ENCODE measurements at regions of chr3 and their contacts with region 1.

Region 1: GRCh38 chr3:187150599-187150998 is 11.3 kb upstream of the RPL39L start:
- DNase-seq: peak; percentile 85
- ATAC-seq: peak; percentile 86
- H3K4me3 Mint-ChIP-seq: no peak overlapping the region
- H3K27ac Mint-ChIP-seq: no peak overlapping the region
- H3K4me1 Mint-ChIP-seq: no peaks in the 10 kb centered on the region
- H3K27me3 Mint-ChIP-seq: no peaks in the 10 kb centered on the region
- CTCF ChIP-seq: peak; percentile 55

Region 2: DNA sequence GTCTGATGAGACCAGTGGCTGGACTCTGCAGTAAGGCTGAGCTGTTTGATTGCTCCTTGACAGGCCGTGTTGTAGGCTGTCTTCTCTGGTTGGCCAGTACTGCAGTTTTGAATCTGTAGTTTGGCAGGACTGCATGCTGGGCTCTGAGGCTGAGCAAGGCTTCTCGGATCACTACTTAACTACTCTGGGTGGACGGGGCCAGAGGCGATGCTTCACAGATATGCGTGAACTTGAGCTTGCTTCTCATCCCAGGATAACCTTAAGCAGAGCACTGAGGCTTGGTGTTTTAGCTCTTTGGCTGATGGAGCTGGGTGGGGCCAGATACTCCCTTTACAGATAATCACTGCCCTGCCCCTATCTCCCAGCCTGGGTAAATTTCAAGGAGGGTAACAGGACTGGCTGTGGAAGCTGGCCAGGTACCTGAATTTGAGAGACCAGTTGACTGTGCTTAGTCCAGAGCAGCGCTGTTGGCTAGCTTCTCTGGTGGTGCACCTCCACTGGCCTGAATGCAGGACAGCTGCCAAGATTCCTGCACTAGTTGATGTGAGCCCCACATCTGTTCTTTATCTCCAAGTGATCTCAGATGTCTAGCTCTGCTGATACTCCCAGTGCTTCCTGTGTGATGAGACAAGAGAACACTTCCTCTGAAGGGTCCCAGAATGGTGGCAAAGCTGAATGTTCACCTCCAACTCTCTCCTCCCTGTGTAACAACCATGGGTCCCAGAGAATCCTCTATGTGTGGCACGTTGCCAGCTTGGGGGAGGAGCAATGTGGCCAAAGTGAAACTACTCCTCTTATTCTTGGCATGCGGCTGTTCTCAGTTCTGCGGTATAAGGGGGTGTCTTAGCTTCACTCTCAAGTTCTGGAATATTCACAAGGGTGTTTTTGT is 49.2 kb before region 1 on chr3:
- CTCF ChIA-PET with region 1: interaction called, 10 read pairs
- POLR2A ChIA-PET with region 1: interaction called, 3 read pairs
- intact Hi-C with region 1: no loop called
- DNase-seq: peak; percentile 66
- ATAC-seq: peak; percentile 73
- H3K4me3 Mint-ChIP-seq: no peak overlapping the region
- H3K27ac Mint-ChIP-seq: peak overlapping the region; percentile 26
- H3K4me1 Mint-ChIP-seq: peaks cover 29% of the 10 kb centered on the region
- H3K27me3 Mint-ChIP-seq: no peaks in the 10 kb centered on the region
- CTCF ChIP-seq: no peak

Region 3: DNA sequence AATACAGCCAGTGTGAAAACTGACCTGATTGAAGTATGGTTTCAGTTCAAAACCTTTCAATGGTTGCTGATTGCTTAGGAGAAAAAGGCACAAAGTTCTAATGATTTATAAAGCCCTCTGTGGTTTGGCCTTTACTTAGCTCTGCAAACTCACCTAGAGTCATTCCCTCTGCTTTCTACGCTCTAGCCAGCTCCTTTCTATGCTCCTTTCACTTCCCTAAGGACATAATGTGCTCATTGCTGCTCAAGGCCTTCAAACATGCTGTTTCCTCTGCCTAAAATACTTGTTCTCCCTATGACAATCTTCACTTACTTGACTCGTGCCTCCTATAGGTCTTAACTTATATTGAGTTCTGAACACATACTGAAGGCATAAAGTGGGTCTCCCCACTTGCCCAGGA is 30.3 kb before region 1 on chr3:
- CTCF ChIA-PET with region 1: interaction called, 116 read pairs
- POLR2A ChIA-PET with region 1: no interaction called
- intact Hi-C with region 1: no loop called
- DNase-seq: no peak
- ATAC-seq: no peak
- H3K4me3 Mint-ChIP-seq: no peak overlapping the region
- H3K27ac Mint-ChIP-seq: no peak overlapping the region
- H3K4me1 Mint-ChIP-seq: peaks cover under 1% of the 10 kb centered on the region
- H3K27me3 Mint-ChIP-seq: no peaks in the 10 kb centered on the region
- CTCF ChIP-seq: no peak

Region 4: GRCh38 chr3:187130346-187131066 is 20.1 kb before region 1 on chr3:
- CTCF ChIA-PET with region 1: interaction called, 13 read pairs
- POLR2A ChIA-PET with region 1: no interaction called
- intact Hi-C with region 1: no loop called
- DNase-seq: peak; percentile 58
- ATAC-seq: peak; percentile 92
- H3K4me3 Mint-ChIP-seq: peak overlapping the region; percentile 49
- H3K27ac Mint-ChIP-seq: peak overlapping the region; percentile 97
- H3K4me1 Mint-ChIP-seq: peaks cover 35% of the 10 kb centered on the region
- H3K27me3 Mint-ChIP-seq: no peaks in the 10 kb centered on the region
- CTCF ChIP-seq: no peak

Region 5: GRCh38 chr3:187164885-187165543 is 14.4 kb after region 1 on chr3:
- CTCF ChIA-PET with region 1: interaction called, 58 read pairs
- POLR2A ChIA-PET with region 1: interaction called, 5 read pairs
- intact Hi-C with region 1: no loop called
- DNase-seq: peak; percentile 52
- ATAC-seq: peak; percentile 80
- H3K4me3 Mint-ChIP-seq: no peak overlapping the region
- H3K27ac Mint-ChIP-seq: no peak overlapping the region
- H3K4me1 Mint-ChIP-seq: peaks cover under 1% of the 10 kb centered on the region
- H3K27me3 Mint-ChIP-seq: no peaks in the 10 kb centered on the region
- CTCF ChIP-seq: peak; percentile 88

Region 6: DNA sequence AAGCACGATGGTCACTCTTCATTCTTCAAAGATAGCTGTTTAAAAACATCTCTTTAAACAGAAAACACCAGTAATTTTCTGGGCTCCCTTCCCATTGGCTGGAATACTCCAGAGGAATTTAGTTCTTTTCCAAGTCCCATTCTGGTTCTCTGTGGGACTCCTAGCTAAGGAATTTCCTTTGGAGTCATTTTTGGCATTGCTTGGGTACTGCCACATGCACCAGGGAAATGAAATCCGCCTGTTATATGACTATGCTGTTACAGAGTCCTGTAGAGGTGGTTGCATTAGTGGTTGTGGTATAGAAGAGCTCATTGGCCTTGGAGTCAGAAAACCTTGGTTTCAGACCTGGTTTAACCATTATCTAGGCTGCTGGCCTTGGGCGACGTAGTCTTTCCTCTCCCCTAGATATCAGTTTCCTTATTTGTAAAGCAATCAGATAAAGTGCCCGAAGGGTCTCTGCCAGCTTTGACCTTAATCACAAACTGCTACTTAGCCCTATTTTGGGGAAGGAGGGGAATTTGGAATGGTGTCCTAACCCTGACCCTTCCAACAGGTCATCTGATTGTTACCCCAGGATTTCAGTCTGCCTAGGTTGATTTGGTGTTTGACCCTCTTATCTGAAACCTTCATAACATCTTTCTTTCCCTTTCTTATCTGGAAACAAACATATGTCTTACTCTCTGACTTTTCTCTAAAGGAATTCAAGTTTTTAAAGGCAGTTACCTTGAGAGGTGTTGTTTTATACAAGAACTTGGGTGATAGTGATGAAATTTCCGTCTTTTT is 60.1 kb after region 1 on chr3:
- CTCF ChIA-PET with region 1: no interaction called
- POLR2A ChIA-PET with region 1: no interaction called
- intact Hi-C with region 1: no loop called
- DNase-seq: no peak
- ATAC-seq: no peak
- H3K4me3 Mint-ChIP-seq: no peak overlapping the region
- H3K27ac Mint-ChIP-seq: no peak overlapping the region
- H3K4me1 Mint-ChIP-seq: no peaks in the 10 kb centered on the region
- H3K27me3 Mint-ChIP-seq: peaks cover 4% of the 10 kb centered on the region
- CTCF ChIP-seq: no peak

Measured in activated CD8-positive, alpha-beta T cell treated with anti-CD3 and anti-CD28 coated beads for 36 hours (primary cell).